ENCODE measurements at regions of chr11 and their contacts with region 1.

Region 1: GRCh38 chr11:47426061-47426956 is at the start of gene PSMC3:
- DNase-seq: peak; percentile 94 to 99 (median 98)
- ATAC-seq: peak; percentile 96 to 97
- H3K4me3 Mint-ChIP-seq: peak within 1 kb of the TSS; percentile 98 to 100 (median 99)
- H3K27ac Mint-ChIP-seq: peak within 1 kb of the TSS; percentile 97 to 100 (median 98)
- H3K4me1 Mint-ChIP-seq: peaks cover 13 to 30% (median 29%) of the 10 kb centered on the region in 4 donors
- H3K27me3 Mint-ChIP-seq: no peaks in the 10 kb centered on the region
- polyA plus RNA-seq, gene PSMC3: 91.5 to 106 (median 94.0) TPM

Region 2: GRCh38 chr11:47415949-47416472 is 10.3 kb before region 1 on chr11:
- POLR2A ChIA-PET with region 1: interaction called, 36 read pairs
- DNase-seq: no peak
- ATAC-seq: no peak
- H3K4me3 Mint-ChIP-seq: no peak overlapping the region
- H3K27ac Mint-ChIP-seq: no peak overlapping the region
- H3K4me1 Mint-ChIP-seq: peaks cover 0 to 5% (median 2%) of the 10 kb centered on the region in 4 donors
- H3K27me3 Mint-ChIP-seq: no peaks in the 10 kb centered on the region

Region 3: DNA sequence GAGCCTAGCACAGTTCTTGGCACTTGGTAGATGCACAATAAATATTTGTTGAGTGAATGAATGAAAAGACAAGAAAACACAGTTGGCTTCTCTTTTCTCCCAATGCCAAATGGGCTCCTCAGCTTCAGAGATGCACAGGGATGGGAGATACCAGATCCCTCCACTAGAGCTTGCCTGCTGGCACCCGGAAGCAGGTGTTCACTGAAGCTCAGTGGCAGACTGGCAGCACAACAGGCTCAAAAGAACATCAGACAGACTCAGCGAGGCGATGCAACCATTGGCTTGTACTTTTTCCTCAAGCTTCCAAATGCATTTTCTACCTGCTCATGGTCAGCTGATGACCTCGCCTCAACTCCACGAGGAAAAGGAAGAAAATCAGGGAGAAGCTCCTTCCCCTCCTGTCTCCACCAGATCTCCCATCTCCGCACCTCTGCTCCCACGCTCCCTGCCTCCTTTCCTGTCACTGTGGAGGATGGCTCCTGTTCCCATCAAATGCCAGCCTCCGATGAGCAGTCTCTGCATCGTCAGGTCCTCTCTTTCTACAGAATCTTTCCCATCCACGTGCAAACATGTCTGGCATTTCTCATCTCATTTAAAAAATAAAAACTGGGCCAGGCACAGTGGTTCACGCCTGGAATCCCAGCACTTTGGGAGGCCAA is 16.9 kb after region 1 on chr11:
- POLR2A ChIA-PET with region 1: no interaction called
- DNase-seq: no peak
- ATAC-seq: peak in 1 of 2 donors; percentile 53
- H3K4me3 Mint-ChIP-seq: peak overlapping the region in 3 of 10 donors; percentile 5 to 37 (median 24)
- H3K27ac Mint-ChIP-seq: peak overlapping the region in 4 of 10 donors; percentile 29 to 86 (median 52)
- H3K4me1 Mint-ChIP-seq: peaks cover 0 to 9% (median 4%) of the 10 kb centered on the region in 4 donors
- H3K27me3 Mint-ChIP-seq: no peaks in the 10 kb centered on the region

Region 4: GRCh38 chr11:47464483-47464882 is 38.2 kb after region 1 on chr11:
- POLR2A ChIA-PET with region 1: no interaction called
- DNase-seq: no peak
- ATAC-seq: no peak
- H3K4me3 Mint-ChIP-seq: no peak overlapping the region
- H3K27ac Mint-ChIP-seq: peak overlapping the region in 4 of 10 donors; percentile 2 to 50 (median 22)
- H3K4me1 Mint-ChIP-seq: peaks cover 3 to 12% (median 10%) of the 10 kb centered on the region in 4 donors
- H3K27me3 Mint-ChIP-seq: no peaks in the 10 kb centered on the region

Region 5: GRCh38 chr11:47541070-47541469 is 114.8 kb after region 1 on chr11:
- POLR2A ChIA-PET with region 1: no interaction called
- DNase-seq: no peak
- ATAC-seq: no peak
- H3K4me3 Mint-ChIP-seq: peak overlapping the region in 9 of 10 donors; percentile 25 to 79 (median 57)
- H3K27ac Mint-ChIP-seq: peak overlapping the region in 9 of 10 donors; percentile 14 to 95 (median 67)
- H3K4me1 Mint-ChIP-seq: peaks cover 29 to 89% (median 70%) of the 10 kb centered on the region in 4 donors
- H3K27me3 Mint-ChIP-seq: no peaks in the 10 kb centered on the region